CD4-positive, alpha-beta memory T cell (primary cell): ENCODE measurements at regions of chr2 and their contacts with region 1.

Region 1: DNA sequence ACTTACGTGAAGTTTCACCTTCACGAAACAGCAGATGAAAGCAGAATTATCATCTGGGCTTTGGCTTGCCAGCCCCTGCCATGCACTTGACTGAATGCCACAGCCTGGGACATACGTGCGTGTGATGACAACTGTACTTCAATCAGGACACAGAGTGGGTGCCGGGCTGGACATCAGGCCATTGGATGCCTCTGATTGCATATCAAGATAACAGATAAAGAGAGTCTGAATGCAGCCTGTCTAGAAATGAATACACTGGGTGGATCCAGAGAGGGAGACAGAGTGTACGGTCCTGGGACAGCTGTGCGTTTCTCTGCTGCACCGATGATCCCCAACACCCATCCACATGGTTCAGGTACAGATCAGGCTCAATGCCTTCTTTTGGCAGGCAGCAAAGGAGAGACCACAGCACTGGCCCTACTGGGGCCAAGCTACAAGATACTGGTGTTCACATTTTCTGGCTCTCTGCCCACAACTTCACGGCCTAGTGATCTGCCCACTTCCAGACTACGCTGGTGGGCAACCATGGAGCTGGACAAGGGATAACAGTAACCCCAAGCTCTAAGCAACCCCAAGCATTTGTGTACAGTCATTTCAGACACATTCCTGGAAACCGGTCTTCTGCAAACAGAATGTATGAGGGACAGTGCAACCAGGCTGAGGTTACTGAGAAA is 35.6 kb downstream of the FBLN7 start:
- DNase-seq: no peak
- H3K4me3 ChIP-seq: no peak overlapping the region
- H3K4me3 Mint-ChIP-seq: peak overlapping the region in 7 of 8 donors; percentile 15 to 71 (median 51)
- H3K27ac ChIP-seq: no peak overlapping the region
- H3K27ac Mint-ChIP-seq: peak overlapping the region; percentile 3 to 85 (median 68)
- H3K4me1 ChIP-seq: peaks cover 8% of the 10 kb centered on the region
- H3K4me1 Mint-ChIP-seq: peaks cover 9 to 22% (median 17%) of the 10 kb centered on the region in 4 donors
- H3K27me3 ChIP-seq: no peaks in the 10 kb centered on the region
- H3K27me3 Mint-ChIP-seq: no peaks in the 10 kb centered on the region

Region 2: DNA sequence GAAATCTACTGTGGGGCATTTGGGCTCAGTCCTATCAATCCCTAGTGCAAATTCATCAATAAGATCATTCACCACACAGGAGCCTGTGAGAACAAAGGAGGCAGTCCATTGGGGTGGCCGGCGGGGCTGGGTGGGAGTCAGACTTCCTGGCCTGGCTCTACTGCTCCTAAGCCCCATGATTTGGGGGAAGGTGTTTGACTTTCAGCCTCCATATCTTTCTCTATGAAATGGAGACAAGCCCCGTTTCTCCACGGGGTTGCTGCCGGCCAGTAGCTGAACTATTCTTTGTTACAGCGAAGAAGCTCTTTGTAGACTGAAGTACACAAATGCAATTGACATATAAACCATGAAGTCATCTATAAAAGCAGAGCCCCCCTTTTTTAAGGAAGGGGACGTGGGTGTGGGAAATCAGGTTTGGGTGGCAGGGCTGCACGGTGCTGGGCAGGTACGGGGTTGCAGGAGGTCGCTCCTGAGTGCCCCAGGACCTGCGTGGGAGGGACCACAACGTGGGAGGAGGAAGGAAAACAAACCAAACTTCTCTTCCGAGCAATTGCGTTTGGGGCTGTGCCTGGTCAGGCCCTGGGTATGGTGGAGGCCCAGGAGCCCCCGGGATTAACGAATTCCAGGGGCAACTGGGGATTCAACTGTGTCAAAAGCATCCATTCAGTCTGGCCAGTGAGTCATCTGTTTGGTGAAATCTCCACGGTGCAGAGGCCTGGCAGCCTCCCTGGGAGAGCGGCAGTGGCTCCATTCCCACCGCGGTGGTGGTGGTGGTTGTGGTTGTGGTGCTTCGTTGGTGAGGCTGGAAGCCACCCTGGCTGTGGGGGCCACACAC is 17.4 kb before region 1 on chr2:
- CTCF ChIA-PET with region 1: interaction called, 4 read pairs
- POLR2A ChIA-PET with region 1: interaction called, 8 read pairs
- intact Hi-C with region 1: loop called (anchors 2 kb)
- DNase-seq: peak in 2 of 5 donors; percentile 21 to 51
- H3K4me3 ChIP-seq: peak overlapping the region; percentile 23 to 53
- H3K4me3 Mint-ChIP-seq: peak overlapping the region; percentile 78 to 89 (median 82)
- H3K27ac ChIP-seq: peak overlapping the region; percentile 16
- H3K27ac Mint-ChIP-seq: peak overlapping the region; percentile 82 to 95 (median 89)
- H3K4me1 ChIP-seq: peaks cover 28% of the 10 kb centered on the region
- H3K4me1 Mint-ChIP-seq: peaks cover 23 to 37% (median 31%) of the 10 kb centered on the region in 4 donors
- H3K27me3 ChIP-seq: no peaks in the 10 kb centered on the region
- H3K27me3 Mint-ChIP-seq: no peaks in the 10 kb centered on the region